Left colon (tissue), 2 donors: ENCODE measurements at regions of chr15 and their contacts with region 1.

Region 1: GRCh38 chr15:58726867-58727266 is 22.6 kb downstream of the ADAM10 start:
- DNase-seq: no peak
- ATAC-seq: no peak

Region 2: DNA sequence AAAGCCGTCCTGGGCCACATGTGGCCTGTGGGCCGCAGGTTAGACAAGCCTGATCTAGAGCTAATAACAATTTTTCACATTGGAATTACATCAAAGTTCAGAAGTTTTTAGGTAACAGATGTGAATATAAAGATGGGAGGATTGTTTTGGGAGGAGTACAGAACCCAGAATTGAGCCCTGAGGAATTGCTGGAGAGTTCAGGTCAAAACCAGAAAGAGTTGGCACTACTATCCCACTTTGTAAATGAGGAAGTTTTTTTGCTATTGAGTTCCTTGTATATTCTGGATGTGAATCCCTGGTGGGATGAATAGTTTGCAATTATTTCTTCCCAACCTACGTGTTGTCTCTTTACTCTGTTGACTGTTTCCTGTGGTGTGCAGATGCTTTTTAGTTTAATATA is 404.6 kb before region 1 on chr15:
- intact Hi-C with region 1: loop called in 1 of 2 experiments (anchors 5 kb)
- DNase-seq: no peak
- ATAC-seq: no peak

Region 3: DNA sequence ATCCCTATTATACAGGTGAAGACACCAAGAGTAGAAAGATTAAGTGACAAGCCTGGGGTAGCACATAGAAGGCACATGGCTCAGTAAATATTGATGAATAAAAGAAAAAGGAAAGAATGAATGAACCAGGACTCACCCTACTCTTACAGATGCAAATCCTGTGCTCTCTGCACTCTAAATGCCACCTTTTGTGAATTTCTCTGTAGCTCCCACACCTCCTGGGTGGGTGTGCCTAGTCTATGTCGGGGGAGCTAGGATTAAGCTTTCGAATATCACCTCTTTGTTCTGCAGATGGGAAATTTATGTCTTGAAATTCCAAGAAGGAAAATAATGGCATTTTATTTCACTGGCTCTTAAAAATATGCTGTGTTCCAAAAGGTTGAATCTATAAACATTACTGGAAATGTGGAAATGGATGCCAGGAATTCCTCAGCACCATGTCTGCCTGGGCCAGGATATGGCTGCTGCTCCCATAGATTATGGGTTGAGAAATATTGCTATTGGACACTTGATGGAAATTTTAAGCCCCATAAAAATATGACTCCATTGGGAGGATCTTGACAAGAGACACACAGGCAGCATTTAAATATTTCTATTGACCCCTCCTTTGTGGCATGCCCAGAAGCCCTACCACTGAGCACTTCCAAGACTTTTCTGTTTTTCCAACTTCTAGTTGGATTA is 421.4 kb after region 1 on chr15:
- intact Hi-C with region 1: no loop called
- DNase-seq: no peak
- ATAC-seq: no peak